B cell (primary cell): ENCODE measurements at regions of chr4 and their contacts with region 1.

Region 1: DNA sequence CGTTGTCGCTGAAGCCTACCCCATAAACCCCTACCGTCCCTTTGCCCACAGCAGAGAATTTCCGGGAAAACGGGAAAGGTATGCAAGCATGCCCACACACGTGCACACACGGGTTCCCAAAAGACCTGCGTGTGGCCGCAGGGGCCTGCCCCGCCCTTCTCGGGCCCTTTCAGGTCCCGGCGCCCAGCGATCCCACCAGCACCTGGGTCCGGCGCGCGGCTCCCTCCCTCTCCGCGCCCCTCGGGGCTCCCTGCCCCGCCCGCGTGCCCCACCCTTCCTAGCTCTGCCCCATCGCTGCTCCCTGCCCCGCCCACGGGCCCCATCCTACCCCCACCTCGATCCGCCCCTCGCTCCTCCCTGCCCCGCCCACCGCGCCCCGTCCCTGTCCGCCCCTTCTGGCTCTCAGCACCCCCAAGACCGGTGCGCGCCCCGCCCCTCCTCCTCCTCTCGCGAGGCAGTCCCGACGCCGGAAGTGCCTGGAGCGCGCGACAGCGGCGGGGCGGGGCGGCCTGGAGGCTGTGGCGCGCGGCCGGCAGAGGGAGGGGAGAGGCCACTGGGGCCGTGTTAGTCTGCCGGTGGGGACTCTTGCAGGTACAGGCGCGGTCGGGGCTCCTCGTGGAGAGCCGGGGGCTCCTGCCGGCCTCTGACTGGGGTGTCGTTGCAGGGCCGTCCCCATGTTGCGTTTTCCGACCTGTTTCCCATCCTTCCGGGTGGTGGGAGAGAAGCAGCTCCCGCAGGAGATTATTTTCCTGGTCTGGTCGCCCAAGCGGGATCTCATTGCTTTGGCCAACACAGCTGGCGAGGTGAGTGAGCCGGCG is at the start of gene ANAPC4:
- DNase-seq: peak; percentile 96
- ATAC-seq: peak; percentile 96
- H3K4me3 ChIP-seq: peak within 1 kb of the TSS; percentile 76 to 92 (median 86)
- H3K4me3 Mint-ChIP-seq: no peak within 1 kb of the TSS
- H3K27ac ChIP-seq: peak within 1 kb of the TSS; percentile 28 to 64
- H3K27ac Mint-ChIP-seq: peak within 1 kb of the TSS; percentile 82
- H3K4me1 ChIP-seq: peaks cover 15 to 23% of the 10 kb centered on the region in 2 donors
- H3K4me1 Mint-ChIP-seq: peaks cover 9% of the 10 kb centered on the region
- H3K27me3 ChIP-seq: no peaks in the 10 kb centered on the region
- H3K27me3 Mint-ChIP-seq: no peaks in the 10 kb centered on the region
- CTCF ChIP-seq: peak; percentile 9
- total RNA-seq, gene ANAPC4: 52.6 and 62.5 TPM in 2 replicates

Region 2: DNA sequence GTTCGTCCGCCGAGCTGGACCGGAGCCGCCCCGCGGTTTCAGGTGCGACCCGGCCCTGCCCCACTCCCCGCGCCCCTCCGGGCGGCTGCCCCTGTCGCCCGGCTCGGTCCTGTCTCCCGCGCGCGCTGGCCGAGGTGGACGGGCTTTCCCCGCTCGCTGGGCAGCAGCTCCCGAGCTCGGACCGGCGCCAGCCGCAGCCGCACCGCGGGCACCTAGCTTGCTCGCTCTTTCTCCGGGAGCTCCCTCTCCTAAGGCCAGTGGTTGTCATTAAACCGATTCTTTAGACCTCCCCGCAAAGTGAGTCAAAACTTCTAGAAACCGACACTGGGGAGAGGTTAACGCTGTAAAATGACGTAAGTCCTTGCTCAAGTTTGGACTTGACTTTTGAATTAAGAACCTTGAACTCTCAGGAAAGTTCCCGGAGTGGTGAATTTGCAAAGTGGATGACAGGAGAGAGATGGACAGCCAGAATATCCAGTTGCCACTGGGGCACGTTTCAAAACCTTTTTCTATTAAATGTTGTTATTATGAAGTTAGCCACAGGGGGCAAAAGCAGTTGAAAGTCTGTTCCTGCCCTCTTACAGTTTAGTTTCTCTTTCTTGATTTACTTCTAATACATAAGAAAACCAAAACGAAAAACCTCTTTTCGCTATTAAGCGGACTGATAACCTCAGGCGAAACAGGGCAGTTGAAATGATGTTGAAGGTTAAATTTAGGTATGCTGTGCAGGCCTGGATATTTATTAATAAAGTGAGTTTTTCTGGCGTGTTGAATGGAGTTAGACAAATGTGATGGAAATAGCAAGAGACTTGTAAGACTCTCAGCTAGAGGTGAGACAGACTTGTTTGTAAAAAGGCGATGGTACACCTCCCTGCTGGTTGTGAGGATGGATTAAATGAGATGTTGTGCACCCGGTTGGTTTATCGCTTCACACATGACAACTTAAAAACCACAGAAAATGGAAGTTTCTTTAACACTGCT is 142.3 kb before region 1 on chr4:
- CTCF ChIA-PET with region 1: interaction called, 7 read pairs
- POLR2A ChIA-PET with region 1: no interaction called
- intact Hi-C with region 1: loop called (anchors 1 kb)
- DNase-seq: peak; percentile 85
- ATAC-seq: peak; percentile 50
- H3K4me3 ChIP-seq: peak overlapping the region; percentile 72 to 91 (median 79)
- H3K4me3 Mint-ChIP-seq: peak overlapping the region; percentile 85
- H3K27ac ChIP-seq: peak overlapping the region; percentile 84 to 85
- H3K27ac Mint-ChIP-seq: peak overlapping the region; percentile 82
- H3K4me1 ChIP-seq: peaks cover 25 to 29% of the 10 kb centered on the region in 2 donors
- H3K4me1 Mint-ChIP-seq: peaks cover 39% of the 10 kb centered on the region
- H3K27me3 ChIP-seq: no peaks in the 10 kb centered on the region
- H3K27me3 Mint-ChIP-seq: no peaks in the 10 kb centered on the region
- CTCF ChIP-seq: peak; percentile 59

Region 3: GRCh38 chr4:25351777-25352416 is 25.1 kb before region 1 on chr4:
- CTCF ChIA-PET with region 1: no interaction called
- POLR2A ChIA-PET with region 1: no interaction called
- intact Hi-C with region 1: no loop called
- DNase-seq: no peak
- ATAC-seq: no peak
- H3K4me3 ChIP-seq: no peak overlapping the region
- H3K4me3 Mint-ChIP-seq: no peak overlapping the region
- H3K27ac ChIP-seq: no peak overlapping the region
- H3K27ac Mint-ChIP-seq: no peak overlapping the region
- H3K4me1 ChIP-seq: peaks cover 0 to under 1% of the 10 kb centered on the region in 2 donors
- H3K4me1 Mint-ChIP-seq: peaks cover under 1% of the 10 kb centered on the region
- H3K27me3 ChIP-seq: no peaks in the 10 kb centered on the region
- H3K27me3 Mint-ChIP-seq: no peaks in the 10 kb centered on the region
- CTCF ChIP-seq: no peak

Region 4: DNA sequence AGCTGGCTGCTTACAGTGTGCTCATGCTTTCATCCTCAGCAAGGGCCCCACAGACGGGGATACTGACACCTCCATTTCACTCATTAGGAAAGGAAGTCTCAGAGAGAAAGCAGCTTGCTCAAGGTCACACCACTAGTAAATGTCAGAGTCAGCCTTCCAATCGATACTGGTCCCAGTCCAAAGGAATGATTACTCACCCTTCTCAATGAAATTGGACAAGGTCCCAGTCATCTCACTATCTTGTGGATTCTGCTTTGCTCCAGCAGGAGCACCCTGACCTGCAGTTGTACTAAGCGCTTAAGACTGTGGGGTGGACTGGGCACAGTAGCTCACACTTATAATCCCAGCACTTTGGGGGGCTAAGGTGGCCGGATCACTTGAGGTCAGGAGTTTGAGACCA is 146.4 kb after region 1 on chr4:
- CTCF ChIA-PET with region 1: no interaction called
- POLR2A ChIA-PET with region 1: no interaction called
- intact Hi-C with region 1: no loop called
- DNase-seq: no peak
- ATAC-seq: no peak
- H3K4me3 ChIP-seq: no peak overlapping the region
- H3K4me3 Mint-ChIP-seq: no peak overlapping the region
- H3K27ac ChIP-seq: no peak overlapping the region
- H3K27ac Mint-ChIP-seq: no peak overlapping the region
- H3K4me1 ChIP-seq: no peaks in the 10 kb centered on the region
- H3K4me1 Mint-ChIP-seq: no peaks in the 10 kb centered on the region
- H3K27me3 ChIP-seq: no peaks in the 10 kb centered on the region
- H3K27me3 Mint-ChIP-seq: peaks cover 17% of the 10 kb centered on the region
- CTCF ChIP-seq: no peak

Region 5: DNA sequence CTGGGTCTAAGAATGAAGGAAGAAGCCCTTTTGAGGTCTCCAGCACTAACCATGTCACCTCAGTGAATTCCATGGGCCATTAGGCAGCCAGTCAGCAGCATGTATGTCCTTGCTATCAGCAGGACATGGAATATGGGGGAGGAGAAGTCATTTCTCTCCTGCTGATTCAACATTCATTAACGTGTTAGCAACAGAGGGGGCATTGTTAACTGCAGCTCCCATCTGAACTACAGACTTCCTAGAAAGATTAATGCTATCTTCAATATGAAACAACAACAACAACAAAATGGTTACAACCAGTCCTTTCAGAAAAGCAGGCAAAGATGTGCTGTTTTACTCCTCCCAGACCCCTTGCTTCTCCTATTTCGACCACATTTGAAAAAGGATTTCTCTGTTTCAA is 158.3 kb after region 1 on chr4:
- CTCF ChIA-PET with region 1: no interaction called
- POLR2A ChIA-PET with region 1: no interaction called
- intact Hi-C with region 1: no loop called
- DNase-seq: no peak
- ATAC-seq: no peak
- H3K4me3 ChIP-seq: no peak overlapping the region
- H3K4me3 Mint-ChIP-seq: no peak overlapping the region
- H3K27ac ChIP-seq: no peak overlapping the region
- H3K27ac Mint-ChIP-seq: no peak overlapping the region
- H3K4me1 ChIP-seq: peaks cover 0 to 7% of the 10 kb centered on the region in 2 donors
- H3K4me1 Mint-ChIP-seq: peaks cover 18% of the 10 kb centered on the region
- H3K27me3 ChIP-seq: peaks cover 0 to 3% (median 1%) of the 10 kb centered on the region in 4 experiments
- H3K27me3 Mint-ChIP-seq: peaks cover 20% of the 10 kb centered on the region
- CTCF ChIP-seq: no peak

Region 6: DNA sequence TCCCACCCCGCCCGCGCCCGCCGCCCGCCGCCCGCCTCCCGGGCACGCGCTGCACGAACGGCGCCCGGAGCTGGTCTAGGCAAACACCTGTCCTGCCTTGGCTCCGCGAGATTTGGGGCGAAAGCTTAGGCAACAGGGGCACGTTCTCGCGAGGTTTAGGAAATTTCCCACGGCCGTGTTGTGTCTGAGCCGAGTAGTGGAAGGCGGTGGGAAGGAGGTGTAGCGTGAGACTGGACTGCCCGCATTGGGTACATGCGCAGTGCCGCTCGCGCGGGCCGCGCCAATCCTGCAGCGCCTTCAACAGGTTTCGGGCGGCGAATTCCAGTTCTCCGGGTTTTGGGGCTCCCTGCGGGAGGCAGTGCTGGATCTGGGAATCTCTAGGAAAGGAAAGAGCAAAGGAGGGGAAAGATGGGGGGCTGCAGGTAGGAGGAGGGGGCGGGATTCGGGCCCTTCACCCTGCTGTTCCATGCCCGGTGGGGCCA is 942.5 kb after region 1 on chr4:
- CTCF ChIA-PET with region 1: no interaction called
- POLR2A ChIA-PET with region 1: no interaction called
- intact Hi-C with region 1: loop called (anchors 2 kb)
- DNase-seq: peak; percentile 97
- ATAC-seq: peak; percentile 73
- H3K4me3 ChIP-seq: peak overlapping the region; percentile 75 to 91 (median 87)
- H3K4me3 Mint-ChIP-seq: peak overlapping the region; percentile 99
- H3K27ac ChIP-seq: peak overlapping the region; percentile 78 to 89
- H3K27ac Mint-ChIP-seq: peak overlapping the region; percentile 99
- H3K4me1 ChIP-seq: peaks cover 13 to 22% of the 10 kb centered on the region in 2 donors
- H3K4me1 Mint-ChIP-seq: peaks cover 27% of the 10 kb centered on the region
- H3K27me3 ChIP-seq: no peaks in the 10 kb centered on the region
- H3K27me3 Mint-ChIP-seq: no peaks in the 10 kb centered on the region
- CTCF ChIP-seq: no peak